Esophagus muscularis mucosa (tissue), 4 donors: ENCODE measurements at regions of chr19 and their contacts with region 1.

Region 1: DNA sequence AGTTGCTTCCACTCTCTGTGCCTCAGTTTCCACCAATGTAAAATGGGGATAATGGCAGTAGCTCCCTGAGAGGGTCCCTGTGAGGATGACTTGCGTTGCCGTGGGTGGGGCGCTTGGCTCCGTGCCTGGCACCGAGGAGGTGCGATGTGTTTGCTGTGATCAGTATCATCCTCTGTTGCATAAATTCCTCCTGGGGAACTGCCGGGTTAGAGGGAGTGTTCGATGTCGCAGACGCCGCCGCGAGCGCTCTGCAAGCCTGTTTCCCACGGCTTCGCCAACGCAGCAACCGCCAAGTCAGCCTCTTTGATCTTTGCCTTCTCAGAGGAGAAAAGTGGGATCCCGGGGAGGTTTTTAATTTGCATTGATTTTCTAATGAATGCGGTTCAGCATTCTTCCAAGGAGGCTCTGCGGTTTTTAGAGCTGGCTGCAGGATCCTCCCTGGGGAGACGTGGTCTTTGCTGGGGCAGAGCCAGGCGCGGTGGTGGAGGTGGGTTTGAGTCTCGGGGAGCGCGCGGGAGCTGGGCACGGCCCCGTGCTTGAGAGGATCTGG is 7.6 kb downstream of the GPR32 start:
- DNase-seq: no peak
- H3K4me3 ChIP-seq: no peak overlapping the region
- H3K27ac ChIP-seq: no peak overlapping the region
- H3K4me1 ChIP-seq: no peaks in the 10 kb centered on the region
- H3K27me3 ChIP-seq: peaks cover 0 to 96% (median 40%) of the 10 kb centered on the region in 4 donors
- CTCF ChIP-seq: no peak
- EP300 ChIP-seq: no peak
- POLR2A ChIP-seq: no peak

Region 2: DNA sequence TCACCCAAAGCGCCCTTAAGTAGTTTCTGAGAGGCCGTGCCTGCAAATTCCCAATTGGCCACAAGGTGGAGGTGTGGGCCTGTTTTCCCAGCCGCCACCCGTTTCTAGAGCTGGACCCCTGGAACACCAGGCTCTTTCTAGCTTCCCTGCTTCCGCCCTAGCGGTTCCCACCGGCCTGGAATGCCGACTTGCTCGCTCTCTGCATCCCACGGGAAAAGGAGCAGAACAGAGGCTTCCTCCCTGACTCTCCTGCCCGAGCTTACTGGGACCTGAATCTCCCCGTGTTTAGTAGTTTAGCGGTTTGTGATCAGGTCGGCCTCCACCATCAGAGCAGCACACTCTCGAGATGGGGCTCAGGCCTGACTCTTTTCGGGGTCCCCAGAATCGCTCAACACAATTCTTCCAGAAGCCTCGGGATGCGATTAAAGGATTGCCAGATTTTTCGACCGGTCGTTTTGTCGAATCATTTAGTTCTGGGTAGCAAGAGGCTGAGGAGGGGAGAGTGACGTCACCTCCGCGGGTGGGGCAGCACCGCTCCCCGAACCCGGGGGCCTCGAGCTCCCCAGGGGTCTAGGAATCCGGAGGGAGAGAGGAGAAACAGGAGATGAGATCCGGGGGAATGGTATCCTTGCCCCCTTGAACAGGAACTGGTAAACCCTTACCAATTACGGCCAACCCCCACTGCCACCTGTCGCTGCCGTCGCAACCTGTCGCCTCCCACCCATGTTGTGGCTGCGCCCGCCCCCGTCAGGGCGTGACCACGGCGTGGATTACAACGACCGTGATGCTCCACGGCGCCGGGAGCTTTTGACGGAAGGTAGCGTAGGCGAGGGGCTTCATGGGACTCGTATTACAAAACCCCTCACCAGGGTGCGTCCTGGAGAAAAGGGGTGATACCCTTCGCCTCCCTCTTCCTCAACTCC is 420.4 kb before region 1 on chr19:
- intact Hi-C with region 1: loop called (anchors 5 kb)
- DNase-seq: peak; percentile 94
- H3K4me3 ChIP-seq: peak overlapping the region; percentile 44 to 59 (median 52)
- H3K27ac ChIP-seq: peak overlapping the region; percentile 75 to 87 (median 86)
- H3K4me1 ChIP-seq: peaks cover 3 to 17% (median 15%) of the 10 kb centered on the region in 4 donors
- H3K27me3 ChIP-seq: no peaks in the 10 kb centered on the region
- CTCF ChIP-seq: peak; percentile 88 to 91 (median 88)
- EP300 ChIP-seq: no peak
- POLR2A ChIP-seq: no peak

Region 3: DNA sequence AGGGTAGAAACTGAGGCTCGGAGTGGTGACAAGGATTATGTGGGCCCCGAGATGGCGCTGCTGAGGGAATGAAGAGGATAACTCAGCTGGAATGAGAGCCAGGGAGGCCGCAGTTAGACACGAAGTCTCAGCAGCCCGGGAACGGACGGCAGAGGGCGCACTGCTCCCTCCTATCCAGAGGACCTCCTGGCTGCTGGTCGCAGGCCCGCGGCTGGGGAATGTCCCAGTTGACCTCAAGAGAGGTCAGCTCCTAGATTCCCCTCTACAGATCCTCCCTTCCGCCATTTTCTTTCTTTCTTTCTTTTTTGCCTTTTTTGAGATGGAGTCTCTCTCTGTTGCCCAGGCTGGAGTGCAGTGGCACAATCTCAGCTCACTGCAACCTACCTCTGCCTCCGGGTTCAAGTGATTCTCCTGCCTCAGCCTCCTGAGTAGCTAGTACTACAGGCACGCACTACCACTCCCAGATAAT is 240.0 kb before region 1 on chr19:
- intact Hi-C with region 1: loop called (anchors 2 kb)
- DNase-seq: no peak
- H3K4me3 ChIP-seq: no peak overlapping the region
- H3K27ac ChIP-seq: no peak overlapping the region
- H3K4me1 ChIP-seq: no peaks in the 10 kb centered on the region
- H3K27me3 ChIP-seq: peaks cover 0 to 28% (median 0%) of the 10 kb centered on the region in 4 donors
- CTCF ChIP-seq: peak; percentile 47 to 61 (median 55)
- EP300 ChIP-seq: no peak
- POLR2A ChIP-seq: no peak

Region 4: GRCh38 chr19:50556282-50557008 is 221.4 kb before region 1 on chr19:
- intact Hi-C with region 1: no loop called
- DNase-seq: no peak
- H3K4me3 ChIP-seq: peak overlapping the region; percentile 47 to 55 (median 48)
- H3K27ac ChIP-seq: peak overlapping the region in 1 of 4 donors; percentile 3
- H3K4me1 ChIP-seq: peaks cover 13 to 25% (median 22%) of the 10 kb centered on the region in 4 donors
- H3K27me3 ChIP-seq: peaks cover 0 to 93% (median 22%) of the 10 kb centered on the region in 4 donors
- CTCF ChIP-seq: peak; percentile 58 to 82 (median 67)
- EP300 ChIP-seq: no peak
- POLR2A ChIP-seq: no peak

Region 5: GRCh38 chr19:50669302-50670101 is 108.3 kb before region 1 on chr19:
- intact Hi-C with region 1: loop called (anchors 5 kb)
- DNase-seq: no peak
- H3K4me3 ChIP-seq: no peak overlapping the region
- H3K27ac ChIP-seq: no peak overlapping the region
- H3K4me1 ChIP-seq: peaks cover 4 to 30% (median 23%) of the 10 kb centered on the region in 4 donors
- H3K27me3 ChIP-seq: peaks cover 16 to 96% (median 40%) of the 10 kb centered on the region in 4 donors
- CTCF ChIP-seq: peak; percentile 55 to 68 (median 56)
- EP300 ChIP-seq: no peak
- POLR2A ChIP-seq: no peak

Region 6: DNA sequence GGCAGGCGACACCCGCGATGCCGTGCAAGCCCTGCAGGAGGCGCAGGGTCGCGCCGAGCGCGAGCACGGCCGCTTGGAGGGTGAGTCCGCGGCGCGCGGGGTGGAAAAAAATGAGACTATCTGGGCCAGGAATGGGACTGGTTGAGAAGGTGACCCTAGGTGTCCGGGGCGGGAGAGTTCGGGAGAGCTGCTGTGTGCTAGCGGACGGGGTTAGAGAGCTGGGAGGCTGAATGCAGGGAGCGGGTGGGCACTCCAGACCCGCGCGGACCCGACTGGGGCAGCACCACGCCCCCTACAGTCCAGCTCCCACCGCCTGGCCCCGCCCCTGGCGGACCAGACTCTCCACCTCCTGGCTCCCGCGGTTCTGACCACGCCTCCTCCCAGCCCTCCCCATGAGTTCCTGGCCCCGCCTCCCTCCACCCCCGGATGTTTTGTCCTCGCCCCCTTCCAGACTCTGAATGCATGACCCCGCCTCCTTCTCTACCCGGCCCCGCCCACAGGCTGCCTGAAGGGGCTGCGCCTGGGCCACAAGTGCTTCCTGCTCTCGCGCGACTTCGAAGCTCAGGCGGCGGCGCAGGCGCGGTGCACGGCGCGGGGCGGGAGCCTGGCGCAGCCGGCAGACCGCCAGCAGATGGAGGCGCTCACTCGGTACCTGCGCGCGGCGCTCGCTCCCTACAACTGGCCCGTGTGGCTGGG is 53.2 kb before region 1 on chr19:
- intact Hi-C with region 1: loop called (anchors 5 kb)
- DNase-seq: peak; percentile 99
- H3K4me3 ChIP-seq: peak overlapping the region; percentile 61 to 86 (median 62)
- H3K27ac ChIP-seq: peak overlapping the region; percentile 65 to 80 (median 70)
- H3K4me1 ChIP-seq: peaks cover 17 to 45% (median 32%) of the 10 kb centered on the region in 4 donors
- H3K27me3 ChIP-seq: peaks cover 0 to 77% (median 19%) of the 10 kb centered on the region in 4 donors
- CTCF ChIP-seq: peak; percentile 67 to 71 (median 69)
- EP300 ChIP-seq: no peak
- POLR2A ChIP-seq: peak; percentile 10